ENCODE measurements at regions of chr4 and their contacts with region 1.

Region 1: DNA sequence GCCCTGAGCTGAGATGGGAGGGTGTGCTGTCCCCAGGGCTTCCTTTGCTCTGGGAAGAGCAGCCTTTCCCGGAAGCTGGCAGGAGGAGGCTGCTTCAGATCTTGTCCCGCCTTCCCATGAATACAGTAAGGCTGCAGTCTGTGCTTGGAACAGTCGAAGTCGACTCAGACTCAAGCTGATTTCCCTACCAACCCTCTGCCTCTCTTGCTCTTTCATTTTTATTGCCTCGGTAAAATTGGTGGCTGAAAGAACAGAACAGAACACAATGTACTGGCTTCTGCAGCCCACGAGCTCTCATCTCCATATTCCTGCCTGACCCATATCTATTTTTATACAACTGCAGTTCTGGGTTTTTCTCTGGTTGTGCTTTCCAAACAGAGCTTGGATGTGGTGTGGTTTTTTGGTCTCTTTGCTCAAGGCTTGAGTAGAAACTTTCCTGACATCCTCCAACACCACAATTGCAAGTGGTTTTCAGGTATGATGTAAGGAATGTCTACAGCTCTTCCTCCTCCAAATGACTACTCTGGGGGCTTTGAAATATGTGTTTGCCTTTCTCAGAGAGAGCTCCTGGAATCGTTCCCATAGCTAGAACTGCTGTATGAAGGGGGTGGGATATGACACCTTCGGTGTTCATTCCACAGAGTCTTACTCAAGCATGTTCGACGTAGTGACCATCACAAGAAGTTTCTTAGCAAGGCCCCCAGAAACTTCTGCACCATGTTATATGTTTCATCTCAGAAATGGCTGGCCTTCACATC is 61.3 kb downstream of the ENPP6 start:
- DNase-seq: no peak
- H3K4me3 ChIP-seq: no peak overlapping the region
- H3K27ac ChIP-seq: no peak overlapping the region
- H3K4me1 ChIP-seq: no peaks in the 10 kb centered on the region
- H3K27me3 ChIP-seq: peaks cover 4% of the 10 kb centered on the region
- CTCF ChIP-seq: no peak

Region 2: DNA sequence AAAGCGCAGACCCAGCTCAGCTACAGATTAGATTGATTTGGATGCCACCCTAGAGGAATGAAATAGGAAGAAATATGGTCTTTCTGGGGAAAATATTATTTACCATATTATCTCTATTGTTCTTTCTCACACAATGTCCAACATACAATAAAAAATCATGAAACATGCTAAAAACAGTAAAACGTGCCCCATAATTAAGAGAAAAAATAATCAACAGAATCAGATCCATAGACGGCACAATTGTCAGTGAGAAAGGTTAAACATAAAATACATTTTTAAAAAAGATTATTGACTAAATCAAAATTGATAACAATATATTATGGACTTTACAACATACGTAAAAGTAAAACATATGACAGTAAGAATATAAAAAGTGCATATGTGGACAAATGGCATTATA is 29.5 kb before region 1 on chr4:
- CTCF ChIA-PET with region 1: no interaction called
- dilution Hi-C with region 1: no loop called
- in situ Hi-C with region 1: no loop called
- intact Hi-C with region 1: loop called (anchors 1 kb)
- DNase-seq: no peak
- H3K4me3 ChIP-seq: no peak overlapping the region
- H3K27ac ChIP-seq: no peak overlapping the region
- H3K4me1 ChIP-seq: no peaks in the 10 kb centered on the region
- H3K27me3 ChIP-seq: no peaks in the 10 kb centered on the region
- CTCF ChIP-seq: no peak

Measured in mammary epithelial cell (primary cell).